GM12878 (cell line): ENCODE measurements at regions of chr7 and their contacts with region 1.

Region 1: DNA sequence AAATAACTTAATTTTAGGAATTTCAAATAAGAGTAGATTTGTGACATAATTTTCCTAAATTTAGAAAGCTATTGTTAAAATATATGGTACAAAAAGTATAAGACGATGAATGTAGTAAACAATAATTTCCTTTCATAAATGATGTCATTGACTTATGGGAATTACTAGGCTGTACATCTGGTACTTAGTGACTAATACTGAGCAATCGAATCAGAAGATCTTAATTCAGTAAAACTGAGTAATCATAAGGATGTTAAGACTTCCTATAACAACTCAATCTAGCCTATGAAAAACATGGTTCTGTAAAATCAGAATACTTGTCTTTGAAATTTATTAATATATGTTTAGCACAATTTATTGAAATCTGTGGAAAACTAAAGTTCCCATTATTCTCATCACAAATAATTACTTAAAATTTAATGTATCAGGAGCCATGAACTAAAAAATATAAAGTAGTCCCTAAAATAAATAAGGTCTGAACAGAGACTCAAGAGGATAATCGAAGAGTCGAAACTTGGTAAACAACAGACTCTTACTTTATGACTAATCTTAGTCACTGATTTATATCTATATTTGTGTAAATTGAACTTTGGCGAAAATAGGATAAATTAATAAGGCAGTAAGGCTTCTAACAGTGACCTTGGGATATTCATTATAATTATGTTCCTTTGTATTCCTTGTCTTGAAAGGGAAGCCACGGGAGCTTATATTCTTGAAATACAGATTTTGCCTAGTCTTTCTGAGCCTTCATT is 142.1 kb downstream of the HGF start:
- DNase-seq: no peak
- ATAC-seq: peak; percentile 57
- H3K4me3 ChIP-seq: no peak overlapping the region
- H3K27ac ChIP-seq: no peak overlapping the region
- H3K4me1 ChIP-seq: no peaks in the 10 kb centered on the region
- H3K27me3 ChIP-seq: no peaks in the 10 kb centered on the region
- CTCF ChIP-seq: no peak
- EP300 ChIP-seq: no peak
- POLR2A ChIP-seq: no peak
- RAD21 ChIP-seq: no peak

Region 2: DNA sequence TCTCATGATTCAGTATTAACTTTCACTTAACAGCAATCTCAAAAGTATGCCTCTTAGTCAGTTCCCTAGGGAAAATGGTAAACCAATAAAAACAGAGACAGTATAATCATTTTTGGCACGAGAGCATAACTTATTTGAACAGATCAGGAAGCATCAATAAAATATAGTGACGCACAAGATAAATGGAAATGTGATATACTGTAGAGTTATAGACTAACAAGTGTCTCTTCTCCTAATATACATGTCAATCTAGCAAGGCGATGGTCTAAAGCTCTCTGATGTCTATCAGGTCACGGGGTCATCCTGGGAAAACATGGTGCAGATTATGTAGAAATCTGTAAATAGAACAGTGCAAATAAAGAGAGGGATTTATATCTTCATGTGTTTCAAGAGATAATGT is 10.5 kb after region 1 on chr7:
- CTCF ChIA-PET with region 1: interaction called, 3 read pairs
- POLR2A ChIA-PET with region 1: interaction called, 3 read pairs
- RAD21 ChIA-PET with region 1: interaction called, 4 read pairs
- SMC1A ChIA-PET with region 1: interaction called, 19 read pairs
- in situ Hi-C with region 1: no loop called
- intact Hi-C with region 1: no loop called
- DNase-seq: no peak
- ATAC-seq: no peak; the same call in 2 of the 3 replicates
- H3K4me3 ChIP-seq: no peak overlapping the region
- H3K27ac ChIP-seq: no peak overlapping the region
- H3K4me1 ChIP-seq: no peaks in the 10 kb centered on the region
- H3K27me3 ChIP-seq: no peaks in the 10 kb centered on the region
- CTCF ChIP-seq: no peak
- EP300 ChIP-seq: no peak
- POLR2A ChIP-seq: no peak
- RAD21 ChIP-seq: no peak